Endothelial cell of umbilical vein (primary cell): ENCODE measurements at regions of chr15 and their contacts with region 1.

Region 1: DNA sequence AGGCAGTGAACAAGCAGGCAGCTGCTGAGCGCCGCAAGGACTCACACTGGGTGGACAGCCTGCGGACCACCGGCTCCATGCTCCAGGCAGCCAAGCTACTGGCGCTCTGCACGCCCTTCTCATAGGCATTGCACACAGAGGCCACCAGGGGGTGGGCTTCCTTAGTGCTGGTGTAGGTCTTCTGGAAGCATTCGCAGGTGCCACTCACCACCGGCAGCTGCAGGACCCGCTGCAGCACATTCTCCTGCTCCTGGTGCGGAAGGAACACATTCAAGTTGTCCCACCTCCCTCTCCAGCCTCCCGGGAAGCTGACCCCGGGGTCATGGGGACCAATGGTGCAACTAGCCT is 6.0 kb downstream of the PLIN1 start:
- DNase-seq: peak; percentile 37
- H3K4me3 ChIP-seq: no peak overlapping the region
- H3K27ac ChIP-seq: no peak overlapping the region
- H3K4me1 ChIP-seq: no peaks in the 10 kb centered on the region
- H3K27me3 ChIP-seq: peaks cover 0 to 1% of the 10 kb centered on the region in 2 experiments
- CTCF ChIP-seq: peak; percentile 51 to 79
- POLR2A ChIP-seq: no peak

Region 2: GRCh38 chr15:89334510-89335288 is 338.4 kb before region 1 on chr15 and contains the start of gene POLG:
- CTCF ChIA-PET with region 1: no interaction called
- POLR2A ChIA-PET with region 1: no interaction called
- dilution Hi-C with region 1: no loop called
- intact Hi-C with region 1: no loop called
- DNase-seq: peak; percentile 99
- H3K4me3 ChIP-seq: peak within 1 kb of the TSS; percentile 40 to 91 (median 71)
- H3K27ac ChIP-seq: peak within 1 kb of the TSS; percentile 11
- H3K4me1 ChIP-seq: peaks cover 28% of the 10 kb centered on the region
- H3K27me3 ChIP-seq: peaks cover 0 to 6% of the 10 kb centered on the region in 2 experiments
- CTCF ChIP-seq: no peak
- POLR2A ChIP-seq: peak; percentile 96
- total RNA-seq, gene POLG: 77.7 and 79.4 TPM in 2 replicates

Region 3: DNA sequence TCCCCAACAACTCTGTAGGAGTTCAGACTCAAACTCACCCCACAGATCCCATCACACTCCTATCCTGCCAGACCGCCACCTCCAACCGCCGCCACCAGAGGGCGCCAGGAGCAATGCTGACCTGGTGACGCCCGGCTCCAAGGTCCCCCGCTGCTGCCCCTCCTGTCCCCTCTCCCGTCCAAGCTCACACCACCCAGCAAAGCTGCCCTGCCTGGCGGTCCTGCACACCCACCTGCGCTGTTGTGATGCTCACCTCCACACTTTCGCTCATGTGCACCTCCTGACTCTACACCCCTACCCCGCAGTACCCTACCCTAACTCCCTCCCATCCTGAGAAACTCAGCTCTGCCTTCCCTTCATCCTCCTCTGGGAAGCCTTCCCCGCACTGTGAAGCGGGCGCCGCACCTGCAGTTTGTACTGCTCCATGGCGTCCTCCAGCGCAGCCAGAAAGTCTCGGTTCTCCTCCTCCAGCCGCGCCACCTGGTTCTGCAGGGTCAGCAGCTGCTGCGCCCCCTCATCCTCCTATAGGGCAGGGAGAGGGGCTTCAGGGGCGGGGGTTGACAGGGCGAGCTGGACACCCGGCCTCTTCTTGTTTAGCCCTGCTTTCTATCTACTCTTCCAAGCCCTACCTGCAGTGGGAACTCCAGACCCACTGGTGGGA is 25.8 kb before region 1 on chr15:
- CTCF ChIA-PET with region 1: interaction called, 21 read pairs
- POLR2A ChIA-PET with region 1: no interaction called
- dilution Hi-C with region 1: no loop called
- intact Hi-C with region 1: loop called (anchors 1 kb)
- DNase-seq: peak; percentile 56
- H3K4me3 ChIP-seq: no peak overlapping the region
- H3K27ac ChIP-seq: no peak overlapping the region
- H3K4me1 ChIP-seq: no peaks in the 10 kb centered on the region
- H3K27me3 ChIP-seq: no peaks in the 10 kb centered on the region
- CTCF ChIP-seq: peak; percentile 95
- POLR2A ChIP-seq: no peak

Region 4: GRCh38 chr15:89690276-89691218 is 17.4 kb after region 1 on chr15 and contains the starts of genes PEX11A and WDR93:
- CTCF ChIA-PET with region 1: interaction called, 11 read pairs
- POLR2A ChIA-PET with region 1: no interaction called
- dilution Hi-C with region 1: no loop called
- intact Hi-C with region 1: no loop called
- DNase-seq: peak; percentile 60
- H3K4me3 ChIP-seq: peak within 1 kb of the TSS; percentile 67 to 89 (median 73)
- H3K27ac ChIP-seq: no peak within 1 kb of the TSS
- H3K4me1 ChIP-seq: peaks cover 2% of the 10 kb centered on the region
- H3K27me3 ChIP-seq: peaks cover 7 to 10% of the 10 kb centered on the region in 2 experiments
- CTCF ChIP-seq: no peak
- POLR2A ChIP-seq: no peak
- total RNA-seq, gene PEX11A: 3.2 and 3.7 TPM in 2 replicates
- total RNA-seq, gene WDR93: not detected in 2 replicates

Region 5: GRCh38 chr15:89880721-89881120 is 207.6 kb after region 1 on chr15:
- CTCF ChIA-PET with region 1: no interaction called
- POLR2A ChIA-PET with region 1: no interaction called
- dilution Hi-C with region 1: no loop called
- intact Hi-C with region 1: no loop called
- DNase-seq: peak; percentile 29
- H3K4me3 ChIP-seq: no peak overlapping the region
- H3K27ac ChIP-seq: peak overlapping the region; percentile 31
- H3K4me1 ChIP-seq: peaks cover 4% of the 10 kb centered on the region
- H3K27me3 ChIP-seq: no peaks in the 10 kb centered on the region
- CTCF ChIP-seq: no peak
- POLR2A ChIP-seq: no peak